Posterior vena cava (tissue), 2 donors: ENCODE measurements at regions of chr16 and their contacts with region 1.

Region 1: DNA sequence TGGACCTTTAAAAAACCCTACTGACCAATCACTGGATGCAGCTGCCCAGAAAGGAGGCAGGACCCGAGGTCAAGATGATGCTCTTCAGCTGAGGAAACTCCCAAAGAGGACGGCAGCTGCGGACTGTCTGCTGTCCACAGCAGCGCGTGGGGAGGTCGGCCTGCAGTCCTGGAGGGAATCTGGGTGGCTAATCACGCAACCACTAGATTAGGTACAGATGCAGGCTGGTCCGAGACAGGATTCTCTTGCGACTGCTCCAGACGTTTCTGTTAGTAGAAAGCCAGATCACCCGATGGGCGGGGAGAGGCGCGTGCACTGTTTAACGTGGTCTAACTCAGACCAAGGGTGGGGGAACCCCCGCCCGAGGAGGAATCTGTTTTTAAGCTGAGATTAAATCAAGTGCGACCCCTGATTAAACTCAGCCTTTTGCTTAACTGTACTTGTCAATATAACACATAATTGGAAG is 8.8 kb downstream of the CTRB2 start:
- DNase-seq: peak; percentile 67

Region 2: DNA sequence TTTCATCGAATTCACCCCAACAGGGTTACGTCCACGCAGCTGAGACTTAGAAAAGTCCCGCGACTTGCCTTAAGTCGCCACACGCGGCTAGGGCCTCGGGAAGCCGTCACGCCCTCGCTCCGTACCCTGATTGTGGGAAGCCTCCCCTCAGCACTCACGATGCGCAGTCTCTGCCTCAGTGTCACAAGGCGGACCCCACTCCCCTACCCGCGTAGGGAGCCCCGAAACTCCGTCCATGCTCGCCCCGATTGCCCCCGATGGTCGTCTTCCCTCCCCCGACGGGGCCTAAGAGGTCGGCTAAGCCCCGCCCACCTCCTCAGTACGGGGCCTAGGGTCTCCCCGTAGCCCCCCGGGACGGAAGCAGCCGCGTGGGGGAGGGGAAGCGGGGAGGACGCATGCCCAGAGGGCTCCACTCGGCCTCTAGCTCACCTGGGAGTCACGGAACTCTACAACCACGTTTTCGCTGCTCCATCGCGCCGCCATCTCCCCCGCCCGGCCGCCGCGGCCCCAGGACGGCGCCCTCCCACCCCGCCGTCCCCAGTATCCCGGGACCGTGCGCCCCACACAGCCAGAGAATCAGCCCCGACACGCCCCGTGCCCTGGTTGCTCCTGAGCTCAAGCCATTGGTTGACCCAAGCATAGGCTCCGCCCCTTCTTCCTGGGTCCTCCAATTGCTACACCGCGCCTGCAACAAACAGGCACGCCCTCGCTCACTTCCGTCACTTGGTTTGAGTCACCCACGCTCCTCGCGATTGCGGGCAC is 213.5 kb before region 1 on chr16 and contains the start of gene WDR59:
- intact Hi-C with region 1: no loop called
- DNase-seq: peak; percentile 99
- total RNA-seq, gene WDR59: 32.4 to 32.8 TPM

Region 3: DNA sequence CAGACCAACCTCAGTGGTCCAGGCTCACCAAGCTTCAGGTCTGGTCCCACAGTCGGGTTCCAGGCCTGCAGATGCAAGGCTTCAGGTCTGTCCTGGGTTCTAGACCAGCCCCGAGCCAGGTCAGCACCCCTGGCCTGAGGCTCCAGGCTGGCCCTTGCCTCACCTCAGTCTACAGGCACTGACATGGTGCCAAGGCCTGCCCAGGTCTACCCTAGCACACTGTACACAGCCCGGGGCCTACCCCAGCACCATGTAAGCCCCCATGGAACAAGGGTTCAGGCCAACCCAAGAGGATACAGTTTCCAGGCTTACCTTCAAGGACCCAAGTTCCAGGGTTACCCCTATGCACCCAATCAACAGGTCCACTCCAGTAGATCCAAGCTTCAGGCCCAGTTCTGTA is 23.1 kb before region 1 on chr16:
- intact Hi-C with region 1: loop called in 1 of 2 experiments (anchors 1 kb)
- DNase-seq: no peak

Region 4: DNA sequence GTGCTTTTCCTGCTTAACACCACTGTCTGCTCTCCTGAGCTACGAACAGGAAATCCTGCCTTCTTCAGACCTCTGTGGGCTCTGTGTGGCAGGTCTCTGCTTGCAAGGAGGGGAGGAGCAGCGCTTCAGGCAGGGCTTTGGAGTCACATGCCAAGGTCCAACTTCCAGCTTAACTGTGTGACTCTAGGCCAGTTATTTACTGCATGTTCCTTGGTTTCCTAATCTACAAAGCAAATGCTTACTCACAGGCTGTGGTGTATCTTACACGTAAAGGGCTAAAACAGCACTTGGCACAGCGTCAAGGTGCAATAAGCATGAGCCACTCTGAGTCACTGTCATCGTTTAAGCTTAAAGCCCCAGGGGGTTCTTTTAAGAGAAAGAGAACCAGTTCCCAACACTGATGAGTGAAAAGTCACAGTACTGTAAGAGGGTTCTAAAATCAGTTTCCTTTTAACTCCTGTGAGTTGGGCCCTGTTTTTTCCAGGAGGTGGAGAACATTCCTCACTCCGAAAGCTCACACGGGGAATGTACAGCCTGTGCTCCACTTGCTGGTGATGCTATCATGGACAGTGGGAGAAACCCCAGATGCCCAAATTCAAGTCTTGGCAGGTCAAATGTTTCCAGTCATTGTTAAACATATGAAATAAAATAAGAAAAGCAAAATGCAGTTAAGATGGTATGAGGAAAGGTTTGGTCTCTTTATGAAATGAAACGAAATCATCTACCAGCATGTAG is 107.4 kb after region 1 on chr16:
- intact Hi-C with region 1: no loop called
- DNase-seq: peak; percentile 91

Region 5: GRCh38 chr16:75402821-75403475 is 204.8 kb after region 1 on chr16:
- intact Hi-C with region 1: loop called in 1 of 2 experiments (anchors 5 kb)
- DNase-seq: no peak